CD8-positive, alpha-beta T cell (primary cell): ENCODE measurements at regions of chr10 and their contacts with region 1.

Region 1: DNA sequence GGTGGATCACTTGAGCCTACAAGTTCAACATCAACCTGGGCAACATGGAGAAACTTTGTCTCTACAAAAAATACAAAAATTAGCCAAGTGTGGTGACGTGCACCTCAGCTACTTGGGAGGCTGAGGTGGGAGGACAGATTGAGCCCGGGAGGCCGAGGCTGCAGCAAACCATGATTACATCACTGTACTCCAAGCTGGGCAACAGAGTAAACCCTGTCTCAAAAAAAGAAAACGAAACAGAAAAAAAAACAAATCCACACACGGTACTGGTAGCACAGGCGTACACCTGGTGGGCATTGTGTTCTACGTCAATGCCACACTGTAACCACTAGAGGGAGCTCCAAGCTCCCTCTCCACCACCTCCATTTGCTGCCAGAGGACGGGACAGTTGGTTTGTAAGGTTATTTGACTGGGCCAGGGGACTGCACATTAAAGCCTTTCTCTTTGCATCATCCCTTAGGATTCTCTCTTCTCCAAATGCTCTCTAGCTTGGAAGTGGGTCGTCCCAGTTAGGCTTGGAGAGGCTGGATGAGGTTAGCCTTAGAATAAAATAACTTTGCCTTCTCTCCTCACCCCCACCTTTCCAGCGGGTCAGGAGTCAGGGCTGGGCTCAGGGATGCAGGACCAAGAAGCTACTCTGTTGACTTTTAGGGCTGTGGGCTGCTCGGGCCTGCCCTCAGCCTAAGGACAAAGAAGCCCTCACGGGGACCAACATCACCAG is 130.8 kb downstream of the SORBS1 start:
- DNase-seq: peak in 7 of 9 experiments; percentile 9 to 68 (median 35)
- ATAC-seq: peak; percentile 75
- H3K4me3 ChIP-seq: no peak overlapping the region
- H3K4me3 Mint-ChIP-seq: no peak overlapping the region
- H3K27ac ChIP-seq: no peak overlapping the region
- H3K27ac Mint-ChIP-seq: no peak overlapping the region
- H3K4me1 ChIP-seq: no peaks in the 10 kb centered on the region
- H3K4me1 Mint-ChIP-seq: peaks cover 2% of the 10 kb centered on the region
- H3K27me3 ChIP-seq: no peaks in the 10 kb centered on the region
- H3K27me3 Mint-ChIP-seq: no peaks in the 10 kb centered on the region
- CTCF ChIP-seq: peak; percentile 93

Region 2: DNA sequence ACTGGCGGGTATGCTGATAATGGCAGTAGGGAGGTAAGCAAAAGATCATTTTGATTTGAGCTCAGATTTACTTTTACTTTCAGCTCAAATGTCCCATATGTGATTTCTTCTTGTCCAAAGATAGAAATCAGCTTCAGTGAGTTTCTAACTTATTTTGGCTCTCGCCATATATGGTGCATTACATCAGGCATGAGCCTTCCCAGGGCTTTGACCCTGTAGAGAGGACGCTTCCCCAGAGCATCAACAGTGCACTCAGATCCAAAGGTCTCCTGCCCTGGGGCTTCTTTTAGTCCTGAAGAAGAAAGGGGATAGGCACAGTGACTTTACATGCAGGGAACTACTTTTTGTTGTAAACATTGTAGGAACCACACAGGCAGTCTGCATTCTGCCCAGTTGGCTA is 11.0 kb before region 1 on chr10:
- CTCF ChIA-PET with region 1: interaction called, 10 read pairs
- POLR2A ChIA-PET with region 1: interaction called, 6 read pairs
- intact Hi-C with region 1: no loop called
- DNase-seq: no peak
- ATAC-seq: no peak
- H3K4me3 ChIP-seq: no peak overlapping the region
- H3K4me3 Mint-ChIP-seq: no peak overlapping the region
- H3K27ac ChIP-seq: no peak overlapping the region
- H3K27ac Mint-ChIP-seq: no peak overlapping the region
- H3K4me1 ChIP-seq: no peaks in the 10 kb centered on the region
- H3K4me1 Mint-ChIP-seq: no peaks in the 10 kb centered on the region
- H3K27me3 ChIP-seq: no peaks in the 10 kb centered on the region
- H3K27me3 Mint-ChIP-seq: no peaks in the 10 kb centered on the region
- CTCF ChIP-seq: no peak

Region 3: DNA sequence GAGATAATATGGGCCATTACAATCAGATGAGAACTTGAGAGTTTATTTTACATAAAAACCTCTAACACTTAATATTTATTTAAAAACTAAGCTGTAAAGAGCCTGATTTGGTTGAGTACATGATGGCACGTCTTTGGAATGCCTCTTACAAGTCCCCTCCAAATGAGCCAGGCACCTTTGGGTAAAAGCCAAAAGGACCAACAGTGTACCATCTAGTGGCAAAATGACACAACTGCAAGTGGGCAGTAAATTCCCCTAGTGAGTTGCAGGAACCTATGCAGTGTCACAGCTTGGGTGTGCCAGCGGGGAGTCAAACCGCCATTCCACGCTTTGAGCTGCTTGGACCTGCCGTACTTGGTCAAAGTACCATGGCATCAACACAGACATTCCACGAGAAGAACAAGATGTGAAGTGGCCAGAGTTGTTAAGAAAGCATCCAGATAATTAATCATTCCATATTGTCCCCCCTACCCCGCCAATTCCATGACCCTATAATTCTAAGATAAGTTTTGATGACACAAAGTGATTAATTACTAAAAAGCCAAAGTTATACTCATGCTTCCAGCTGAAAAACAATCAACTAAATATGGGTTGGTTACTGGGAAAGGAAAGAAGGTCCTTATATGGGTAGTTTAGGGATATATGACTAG is 15.6 kb after region 1 on chr10:
- CTCF ChIA-PET with region 1: interaction called, 85 read pairs
- POLR2A ChIA-PET with region 1: no interaction called
- intact Hi-C with region 1: no loop called
- DNase-seq: peak in 4 of 9 experiments; percentile 12 to 58 (median 36)
- ATAC-seq: no peak
- H3K4me3 ChIP-seq: no peak overlapping the region
- H3K4me3 Mint-ChIP-seq: no peak overlapping the region
- H3K27ac ChIP-seq: no peak overlapping the region
- H3K27ac Mint-ChIP-seq: no peak overlapping the region
- H3K4me1 ChIP-seq: no peaks in the 10 kb centered on the region
- H3K4me1 Mint-ChIP-seq: peaks cover 3% of the 10 kb centered on the region
- H3K27me3 ChIP-seq: no peaks in the 10 kb centered on the region
- H3K27me3 Mint-ChIP-seq: peaks cover 12% of the 10 kb centered on the region
- CTCF ChIP-seq: peak; percentile 81

Region 4: GRCh38 chr10:95601116-95601719 is 170.8 kb after region 1 on chr10:
- CTCF ChIA-PET with region 1: interaction called, 121 read pairs
- POLR2A ChIA-PET with region 1: interaction called, 5 read pairs
- intact Hi-C with region 1: loop called in 1 of 2 experiments (anchors 1 kb)
- DNase-seq: peak in 8 of 9 experiments; percentile 13 to 64 (median 33)
- ATAC-seq: no peak
- H3K4me3 ChIP-seq: no peak overlapping the region
- H3K4me3 Mint-ChIP-seq: no peak overlapping the region
- H3K27ac ChIP-seq: no peak overlapping the region
- H3K27ac Mint-ChIP-seq: no peak overlapping the region
- H3K4me1 ChIP-seq: no peaks in the 10 kb centered on the region
- H3K4me1 Mint-ChIP-seq: no peaks in the 10 kb centered on the region
- H3K27me3 ChIP-seq: no peaks in the 10 kb centered on the region
- H3K27me3 Mint-ChIP-seq: no peaks in the 10 kb centered on the region
- CTCF ChIP-seq: peak; percentile 50